ENCODE measurements at regions of chr6 and their contacts with region 1.

Region 1: DNA sequence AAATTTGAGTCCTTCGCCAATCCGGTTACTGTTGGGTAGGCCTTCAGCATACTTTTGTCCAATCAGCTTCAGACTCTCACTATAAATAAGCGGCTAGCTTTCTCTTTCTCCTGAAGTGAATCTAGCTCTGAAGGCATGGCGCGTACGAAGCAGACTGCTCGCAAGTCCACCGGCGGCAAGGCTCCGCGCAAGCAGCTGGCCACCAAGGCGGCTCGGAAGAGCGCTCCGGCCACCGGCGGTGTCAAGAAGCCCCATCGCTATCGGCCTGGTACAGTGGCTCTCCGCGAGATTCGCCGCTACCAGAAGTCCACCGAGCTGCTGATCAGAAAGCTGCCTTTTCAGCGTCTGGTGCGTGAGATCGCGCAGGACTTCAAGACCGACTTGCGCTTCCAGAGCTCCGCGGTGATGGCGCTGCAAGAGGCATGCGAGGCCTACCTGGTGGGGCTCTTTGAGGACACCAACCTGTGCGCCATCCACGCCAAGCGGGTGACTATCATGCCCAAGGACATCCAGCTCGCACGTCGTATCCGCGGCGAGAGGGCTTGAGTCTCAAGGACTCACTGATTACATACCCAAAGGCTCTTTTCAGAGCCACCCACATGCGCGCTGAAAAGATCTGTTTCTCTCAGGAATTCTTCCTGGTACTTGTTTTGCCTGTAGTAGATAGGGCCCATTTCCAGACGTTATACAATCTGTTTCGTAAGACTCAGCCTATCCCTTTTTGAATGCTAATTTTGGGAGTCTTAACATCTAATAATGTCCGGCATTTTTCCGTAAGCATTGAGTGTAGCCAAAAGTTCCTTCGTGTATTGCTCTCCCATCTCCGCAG is 102.0 kb downstream of the OR2B2 start:
- DNase-seq: peak; percentile 80 to 95
- H3K4me3 ChIP-seq: peak overlapping the region; percentile 44
- CTCF ChIP-seq: no peak
- POLR2A ChIP-seq: peak in 1 of 2 donors; percentile 72

Region 2: GRCh38 chr6:27893059-27893835 is 83.1 kb after region 1 on chr6:
- intact Hi-C with region 1: loop called (anchors 10 kb)
- DNase-seq: peak; percentile 85 to 96
- H3K4me3 ChIP-seq: peak overlapping the region; percentile 26
- CTCF ChIP-seq: no peak
- POLR2A ChIP-seq: peak in 1 of 2 donors; percentile 10